Activated T-helper 2 cell treated with anti-CD3 and anti-CD28 coated beads, Interferon-gamma antibody, Interleukin-2, Interleukin-4, amounts not matched to agents 10 μg/mL and 5 μg/mL and 100 μg/mL, durations not matched to agents 14 hours and 24 hours and 36 hours (primary cell): ENCODE measurements at regions of chr5 and their contacts with region 1.

Region 1: DNA sequence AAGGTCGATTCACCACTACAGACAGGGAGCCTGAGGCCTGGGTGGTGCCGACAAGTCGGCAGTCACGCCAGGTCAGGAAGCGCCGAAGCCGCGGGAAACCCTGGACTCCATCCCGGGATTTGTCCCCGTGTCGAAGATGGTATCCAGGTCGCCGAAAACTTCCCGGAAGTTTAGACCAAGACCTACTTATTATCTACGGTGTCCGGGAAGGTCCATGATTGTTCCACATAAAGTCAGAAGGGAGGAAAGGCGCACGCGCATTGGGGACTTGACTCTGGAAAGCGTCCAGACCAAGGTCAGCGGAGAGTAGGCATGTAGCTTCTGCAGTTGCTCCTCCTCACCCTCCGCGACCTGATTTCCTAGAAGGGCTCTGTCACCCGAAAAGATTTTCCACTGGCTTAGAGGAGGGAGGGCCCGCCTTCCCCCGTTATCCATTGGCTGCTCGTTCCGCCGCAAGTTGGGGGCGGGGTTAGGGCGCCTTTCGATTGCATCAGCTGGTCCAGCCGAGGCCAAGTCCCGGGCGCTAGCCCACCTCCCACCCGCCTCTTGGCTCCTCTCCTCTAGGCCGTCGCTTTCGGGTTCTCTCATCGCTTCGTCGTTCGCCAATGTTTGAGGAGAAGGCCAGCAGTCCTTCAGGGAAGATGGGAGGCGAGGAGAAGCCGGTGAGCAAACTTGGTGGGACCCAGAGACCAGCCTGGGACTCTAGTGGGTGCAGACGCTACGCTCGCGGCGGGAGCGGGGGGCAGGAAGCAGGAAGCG is at the start of gene TARS1:
- DNase-seq: peak; percentile 94
- H3K4me3 Mint-ChIP-seq: no peak within 1 kb of the TSS
- H3K27ac Mint-ChIP-seq: no peak within 1 kb of the TSS
- H3K4me1 Mint-ChIP-seq: peaks cover 30% of the 10 kb centered on the region
- H3K27me3 Mint-ChIP-seq: no peaks in the 10 kb centered on the region
- total RNA-seq, gene TARS1: 186 and 187 TPM in 2 replicates

Region 2: GRCh38 chr5:32585446-32586275 is 855.0 kb before region 1 on chr5 and contains the start of gene SUB1:
- intact Hi-C with region 1: loop called (anchors 1 kb)
- DNase-seq: peak; percentile 90
- H3K4me3 Mint-ChIP-seq: peak within 1 kb of the TSS; percentile 96
- H3K27ac Mint-ChIP-seq: peak within 1 kb of the TSS; percentile 99
- H3K4me1 Mint-ChIP-seq: peaks cover 55% of the 10 kb centered on the region
- H3K27me3 Mint-ChIP-seq: no peaks in the 10 kb centered on the region
- total RNA-seq, gene SUB1: 380 and 404 TPM in 2 replicates

Region 3: GRCh38 chr5:33205727-33206410 is 234.8 kb before region 1 on chr5:
- intact Hi-C with region 1: no loop called
- DNase-seq: no peak
- H3K4me3 Mint-ChIP-seq: no peak overlapping the region
- H3K27ac Mint-ChIP-seq: no peak overlapping the region
- H3K4me1 Mint-ChIP-seq: no peaks in the 10 kb centered on the region
- H3K27me3 Mint-ChIP-seq: no peaks in the 10 kb centered on the region

Region 4: GRCh38 chr5:33936004-33936380 is 495.3 kb after region 1 on chr5:
- intact Hi-C with region 1: loop called (anchors 1 kb)
- DNase-seq: peak; percentile 45
- H3K4me3 Mint-ChIP-seq: no peak overlapping the region
- H3K27ac Mint-ChIP-seq: no peak overlapping the region
- H3K4me1 Mint-ChIP-seq: no peaks in the 10 kb centered on the region
- H3K27me3 Mint-ChIP-seq: peaks cover 50% of the 10 kb centered on the region

Region 5: GRCh38 chr5:33969572-33970452 is 529.2 kb after region 1 on chr5:
- intact Hi-C with region 1: loop called (anchors 1 kb)
- DNase-seq: no peak
- H3K4me3 Mint-ChIP-seq: no peak overlapping the region
- H3K27ac Mint-ChIP-seq: no peak overlapping the region
- H3K4me1 Mint-ChIP-seq: peaks cover 42% of the 10 kb centered on the region
- H3K27me3 Mint-ChIP-seq: no peaks in the 10 kb centered on the region

Region 6: DNA sequence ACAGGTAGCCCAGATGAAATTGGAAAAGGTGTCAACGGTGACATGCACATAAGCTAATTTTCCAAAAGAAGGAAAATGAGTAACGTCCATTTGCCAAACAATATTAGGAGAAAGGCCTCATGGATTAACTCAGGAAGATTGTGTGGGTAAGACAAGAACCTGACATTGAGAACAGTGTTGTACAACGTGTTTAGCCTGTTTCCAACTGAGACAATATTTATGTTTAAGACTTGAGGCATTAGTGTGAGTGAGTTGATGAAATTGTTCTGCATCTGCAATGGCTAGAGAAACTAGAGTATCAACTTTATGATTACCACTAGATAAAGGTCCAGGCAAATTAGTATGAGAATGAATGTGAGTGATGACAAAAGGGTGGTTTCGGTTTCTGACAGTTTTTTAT is 1024.2 kb after region 1 on chr5:
- intact Hi-C with region 1: loop called (anchors 5 kb)
- DNase-seq: no peak
- H3K4me3 Mint-ChIP-seq: no peak overlapping the region
- H3K27ac Mint-ChIP-seq: no peak overlapping the region
- H3K4me1 Mint-ChIP-seq: peaks cover 28% of the 10 kb centered on the region
- H3K27me3 Mint-ChIP-seq: peaks cover 4% of the 10 kb centered on the region